WTC11 (cell line): ENCODE measurements at regions of chr16 and their contacts with region 1.

Region 1: DNA sequence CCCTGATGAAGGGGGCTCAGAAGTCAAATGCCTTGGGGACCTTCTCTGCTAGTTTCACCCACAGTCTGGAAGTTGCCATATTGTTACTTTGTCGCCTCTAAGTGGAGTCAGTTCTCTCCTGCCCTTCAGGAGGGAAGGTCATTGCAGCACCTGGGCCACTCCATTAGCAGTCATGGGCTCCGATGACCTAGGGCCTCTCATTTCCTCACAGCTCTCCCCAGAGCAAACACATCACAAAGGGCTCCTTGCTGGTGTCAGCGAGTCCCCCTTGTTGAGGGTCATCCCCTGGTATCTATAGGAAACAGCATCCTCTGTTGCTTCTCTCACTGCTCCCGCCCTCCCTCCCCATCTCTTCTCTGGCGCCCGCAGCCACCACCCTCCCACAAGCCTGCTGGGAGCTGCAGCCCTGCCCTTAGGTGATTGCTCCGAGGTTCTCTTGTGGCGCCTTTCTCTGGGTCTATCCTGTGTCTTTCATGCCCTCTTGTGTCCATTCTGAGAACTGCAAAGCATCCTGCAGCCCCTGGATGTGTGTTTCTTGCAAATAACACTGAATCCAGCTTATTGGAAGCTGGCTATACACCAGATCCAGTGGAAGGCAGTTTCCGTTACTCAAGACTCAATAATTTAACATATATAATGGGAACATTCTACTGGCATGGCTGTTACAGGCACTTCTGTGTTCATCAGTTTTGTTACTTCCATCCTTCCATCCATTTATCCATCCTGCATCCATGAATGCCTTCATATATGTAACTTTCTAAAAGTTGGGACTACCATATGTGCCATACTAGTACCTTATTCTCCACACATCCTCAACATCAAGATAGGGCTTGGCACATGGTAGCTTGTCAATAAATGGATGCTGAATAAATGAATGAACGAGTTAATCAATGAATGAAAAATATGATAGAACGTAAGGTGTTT is 21.2 kb downstream of the PDILT start:
- DNase-seq: peak; percentile 80
- ATAC-seq: peak; percentile 96
- H3K4me3 Mint-ChIP-seq: no peak overlapping the region
- H3K27ac Mint-ChIP-seq: no peak overlapping the region
- H3K4me1 Mint-ChIP-seq: peaks cover 9% of the 10 kb centered on the region
- H3K27me3 Mint-ChIP-seq: no peaks in the 10 kb centered on the region
- CTCF ChIP-seq: peak; percentile 62

Region 2: DNA sequence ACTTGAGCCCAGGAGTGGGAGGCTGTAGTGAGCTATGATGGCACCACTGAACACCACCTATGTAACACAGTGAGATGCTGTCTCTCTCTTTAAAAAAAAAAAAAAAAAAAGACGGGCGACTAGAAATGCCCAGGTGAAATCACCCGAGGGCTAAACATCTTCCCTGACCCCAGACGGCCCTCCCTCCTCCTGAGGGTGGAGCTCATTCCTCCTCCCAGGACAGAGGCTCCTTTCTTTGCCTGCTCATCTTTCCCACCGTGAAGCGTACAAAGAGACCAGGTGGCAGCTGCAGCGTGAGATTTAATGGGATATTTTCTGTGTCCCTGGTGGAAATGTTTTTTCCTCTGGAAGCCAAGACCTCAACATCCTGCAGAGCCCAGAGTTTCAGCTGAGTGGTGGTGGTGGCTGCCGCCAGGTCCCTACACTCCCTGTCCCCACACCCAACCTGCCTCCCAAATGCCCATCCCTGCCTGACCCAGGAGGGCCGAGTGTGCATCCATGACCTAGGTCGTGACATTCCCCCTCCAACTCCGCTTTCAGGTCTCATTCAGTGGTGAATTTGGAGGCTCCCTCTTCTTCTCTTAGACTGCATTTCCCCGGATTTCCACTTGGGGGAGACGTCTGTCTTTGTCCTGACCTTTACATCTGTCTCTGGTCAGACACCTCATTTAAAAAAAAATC is 484.3 kb before region 1 on chr16:
- CTCF ChIA-PET with region 1: interaction called, 79 read pairs
- POLR2A ChIA-PET with region 1: no interaction called
- DNase-seq: peak; percentile 75
- ATAC-seq: peak; percentile 79
- H3K4me3 Mint-ChIP-seq: peak overlapping the region; percentile 45
- H3K27ac Mint-ChIP-seq: no peak overlapping the region
- H3K4me1 Mint-ChIP-seq: peaks cover 16% of the 10 kb centered on the region
- H3K27me3 Mint-ChIP-seq: no peaks in the 10 kb centered on the region
- CTCF ChIP-seq: peak; percentile 75

Region 3: DNA sequence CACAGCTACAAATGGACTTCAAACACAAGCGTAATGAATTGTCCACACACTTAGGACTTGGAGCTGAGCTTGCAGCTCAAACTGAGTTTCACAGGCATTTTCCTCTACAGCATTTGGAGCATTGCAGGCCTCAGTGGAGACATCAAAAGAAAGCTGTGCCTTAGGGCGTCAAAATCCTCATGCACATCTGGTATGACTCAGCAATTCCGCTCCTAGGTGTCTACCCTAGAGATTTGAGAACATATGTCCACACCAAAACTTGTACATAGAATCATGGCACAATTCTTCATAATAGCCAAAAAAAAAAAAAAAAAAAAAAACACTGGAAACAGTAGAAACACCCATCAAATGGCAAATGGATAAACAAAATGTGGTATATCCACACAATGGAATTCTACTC is 103.1 kb before region 1 on chr16:
- CTCF ChIA-PET with region 1: no interaction called
- POLR2A ChIA-PET with region 1: no interaction called
- DNase-seq: no peak
- ATAC-seq: no peak
- H3K4me3 Mint-ChIP-seq: no peak overlapping the region
- H3K27ac Mint-ChIP-seq: no peak overlapping the region
- H3K4me1 Mint-ChIP-seq: no peaks in the 10 kb centered on the region
- H3K27me3 Mint-ChIP-seq: peaks cover 3% of the 10 kb centered on the region; the same call in 1 of the 2 replicates
- CTCF ChIP-seq: no peak

Region 4: GRCh38 chr16:20348365-20349185 is 34.8 kb before region 1 on chr16:
- CTCF ChIA-PET with region 1: interaction called, 13 read pairs
- POLR2A ChIA-PET with region 1: no interaction called
- DNase-seq: peak; percentile 86
- ATAC-seq: peak; percentile 95
- H3K4me3 Mint-ChIP-seq: no peak overlapping the region
- H3K27ac Mint-ChIP-seq: no peak overlapping the region
- H3K4me1 Mint-ChIP-seq: peaks cover 11% of the 10 kb centered on the region
- H3K27me3 Mint-ChIP-seq: no peaks in the 10 kb centered on the region
- CTCF ChIP-seq: peak; percentile 63; the same call in 1 of the 2 replicates

Region 5: GRCh38 chr16:20359997-20360396 is 23.4 kb before region 1 on chr16:
- CTCF ChIA-PET with region 1: interaction called, 24 read pairs
- POLR2A ChIA-PET with region 1: no interaction called
- DNase-seq: peak; percentile 54
- ATAC-seq: peak; percentile 79
- H3K4me3 Mint-ChIP-seq: no peak overlapping the region
- H3K27ac Mint-ChIP-seq: no peak overlapping the region
- H3K4me1 Mint-ChIP-seq: no peaks in the 10 kb centered on the region
- H3K27me3 Mint-ChIP-seq: no peaks in the 10 kb centered on the region; the same call in 1 of the 2 replicates
- CTCF ChIP-seq: peak; percentile 37

Region 6: GRCh38 chr16:20372701-20373100 is 10.7 kb before region 1 on chr16:
- CTCF ChIA-PET with region 1: interaction called, 17 read pairs
- POLR2A ChIA-PET with region 1: no interaction called
- DNase-seq: no peak
- ATAC-seq: no peak
- H3K4me3 Mint-ChIP-seq: no peak overlapping the region
- H3K27ac Mint-ChIP-seq: no peak overlapping the region
- H3K4me1 Mint-ChIP-seq: no peaks in the 10 kb centered on the region
- H3K27me3 Mint-ChIP-seq: no peaks in the 10 kb centered on the region
- CTCF ChIP-seq: no peak

Region 7: GRCh38 chr16:20393801-20394577 is 10.6 kb after region 1 on chr16:
- CTCF ChIA-PET with region 1: interaction called, 15 read pairs
- POLR2A ChIA-PET with region 1: no interaction called
- DNase-seq: no peak
- ATAC-seq: no peak
- H3K4me3 Mint-ChIP-seq: no peak overlapping the region
- H3K27ac Mint-ChIP-seq: no peak overlapping the region
- H3K4me1 Mint-ChIP-seq: peaks cover 6% of the 10 kb centered on the region
- H3K27me3 Mint-ChIP-seq: no peaks in the 10 kb centered on the region
- CTCF ChIP-seq: no peak

Region 8: DNA sequence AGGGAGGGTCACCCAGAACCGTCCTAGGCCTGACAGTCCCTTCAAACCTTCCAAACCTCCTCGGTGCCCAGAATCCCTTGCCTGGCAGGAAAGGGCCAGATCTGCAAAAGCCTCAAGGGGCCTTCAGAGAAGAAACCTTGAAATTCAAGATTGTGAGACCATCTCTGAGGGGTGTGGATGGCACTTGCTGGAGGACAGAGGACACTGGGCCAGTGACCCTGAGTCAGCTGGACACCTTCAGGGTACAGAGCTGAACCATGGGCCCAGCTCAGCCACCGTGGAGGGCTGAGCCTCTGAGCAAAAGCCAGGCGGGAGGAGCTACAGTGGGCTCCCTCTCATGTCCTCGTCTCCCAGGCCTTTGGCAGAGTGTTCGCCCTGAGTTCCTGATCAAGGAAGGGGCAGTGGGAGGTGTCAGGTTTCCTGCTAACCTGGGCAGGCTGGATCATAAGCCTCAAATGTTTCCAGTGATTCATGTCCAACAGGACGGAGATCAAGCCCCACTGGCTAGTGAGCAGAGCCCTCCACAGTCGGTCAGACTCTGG is 18.2 kb after region 1 on chr16:
- CTCF ChIA-PET with region 1: interaction called, 22 read pairs
- POLR2A ChIA-PET with region 1: no interaction called
- DNase-seq: no peak
- ATAC-seq: 0 out of 2 replicates have a peak, but pooled peaks have one; percentile 32
- H3K4me3 Mint-ChIP-seq: no peak overlapping the region
- H3K27ac Mint-ChIP-seq: no peak overlapping the region
- H3K4me1 Mint-ChIP-seq: no peaks in the 10 kb centered on the region
- H3K27me3 Mint-ChIP-seq: no peaks in the 10 kb centered on the region
- CTCF ChIP-seq: no peak

Region 9: GRCh38 chr16:20441191-20441590 is 57.8 kb after region 1 on chr16:
- CTCF ChIA-PET with region 1: no interaction called
- POLR2A ChIA-PET with region 1: no interaction called
- DNase-seq: no peak
- ATAC-seq: no peak
- H3K4me3 Mint-ChIP-seq: no peak overlapping the region
- H3K27ac Mint-ChIP-seq: no peak overlapping the region
- H3K4me1 Mint-ChIP-seq: peaks cover 5% of the 10 kb centered on the region; the same call in 1 of the 2 replicates
- H3K27me3 Mint-ChIP-seq: no peaks in the 10 kb centered on the region
- CTCF ChIP-seq: no peak